Activated T-helper 1 cell treated with anti-CD3 and anti-CD28 coated beads, Interleukin-12 subunit alpha, Interleukin-12 subunit beta, Interleukin-2, Interleukin-4 antibody, amounts not matched to agents 30 ng/mL and 10 ng/mL and 1 ng/mL, durations not matched to agents 14 hours and 24 hours and 36 hours (primary cell): ENCODE measurements at regions of chr10 and their contacts with region 1.

Region 1: DNA sequence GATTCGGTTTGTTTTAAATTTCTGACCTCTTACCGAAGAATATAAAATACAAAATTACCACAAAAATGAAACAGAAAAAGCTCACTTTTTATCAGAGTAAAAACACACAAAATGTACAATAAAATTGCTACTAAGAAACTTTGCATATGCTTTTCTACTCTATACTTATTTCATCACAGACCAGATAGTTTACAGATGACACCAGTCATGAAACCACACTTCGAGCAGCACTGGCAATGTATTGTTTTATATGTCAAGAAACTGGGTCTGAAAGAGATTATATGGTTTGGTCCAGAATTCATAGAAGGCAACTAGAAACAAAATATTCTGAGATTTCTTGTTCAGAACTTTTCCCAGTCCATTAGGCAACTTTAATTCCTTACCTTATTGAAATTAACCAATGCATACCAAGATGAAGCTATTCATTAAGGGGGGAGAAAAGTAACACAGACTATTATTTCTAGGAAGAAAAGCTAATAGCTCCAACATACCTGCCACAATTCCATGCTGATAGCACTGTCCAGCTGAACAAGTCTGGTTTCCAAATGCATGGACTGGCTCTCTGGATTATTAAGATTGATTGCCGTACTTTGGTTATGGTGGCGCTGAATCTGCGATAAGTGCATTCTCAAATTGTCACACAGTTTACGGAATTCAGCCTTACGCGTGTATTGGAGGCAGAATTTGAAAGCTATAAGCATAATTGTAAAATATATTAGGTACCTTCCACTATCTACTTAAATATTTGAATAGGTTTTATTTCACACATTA is 10.0 kb downstream of the EIF3A start:
- DNase-seq: no peak
- H3K4me3 Mint-ChIP-seq: no peak overlapping the region
- H3K27ac Mint-ChIP-seq: no peak overlapping the region
- H3K4me1 Mint-ChIP-seq: peaks cover 40% of the 10 kb centered on the region
- H3K27me3 Mint-ChIP-seq: no peaks in the 10 kb centered on the region

Region 2: DNA sequence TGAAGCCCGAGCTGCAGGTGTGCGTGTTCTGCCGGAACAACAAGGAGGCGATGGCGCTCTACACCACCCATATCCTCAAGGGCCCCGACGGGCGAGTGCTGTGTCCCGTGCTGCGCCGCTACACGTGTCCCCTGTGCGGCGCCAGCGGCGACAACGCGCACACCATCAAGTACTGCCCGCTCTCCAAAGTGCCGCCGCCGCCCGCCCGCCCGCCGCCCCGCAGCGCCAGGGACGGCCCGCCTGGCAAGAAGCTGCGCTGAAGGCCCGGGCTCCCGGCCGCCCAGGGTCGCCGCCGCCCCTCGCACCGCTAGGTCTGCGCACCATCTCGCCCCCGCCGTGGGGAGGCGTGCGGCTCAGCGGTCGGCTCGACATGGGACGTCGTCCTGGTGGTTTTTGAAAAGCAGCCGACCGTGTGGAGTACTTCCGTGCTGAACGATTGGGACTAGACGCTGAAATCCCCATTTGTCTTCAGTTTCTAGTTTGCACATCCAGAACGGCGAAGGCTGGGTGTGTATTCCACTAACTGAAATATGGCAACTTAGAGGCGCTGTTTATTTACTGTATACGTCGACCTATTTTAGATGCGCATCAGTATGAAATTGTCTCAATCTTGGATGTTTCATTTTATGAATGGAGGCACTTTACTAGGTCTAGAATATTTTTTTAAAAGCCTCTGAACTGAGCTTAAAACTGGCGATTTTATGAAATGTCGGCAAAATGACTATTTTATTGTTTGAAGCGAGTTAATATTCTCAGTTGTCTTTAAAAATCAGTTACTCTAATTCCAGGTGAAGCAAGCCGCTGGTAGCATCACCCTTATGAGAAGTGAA is 39.9 kb before region 1 on chr10:
- intact Hi-C with region 1: loop called (anchors 2 kb)
- DNase-seq: peak; percentile 39
- H3K4me3 Mint-ChIP-seq: peak overlapping the region; percentile 73
- H3K27ac Mint-ChIP-seq: peak overlapping the region; percentile 40
- H3K4me1 Mint-ChIP-seq: peaks cover 25% of the 10 kb centered on the region
- H3K27me3 Mint-ChIP-seq: peaks cover 7% of the 10 kb centered on the region

Region 3: DNA sequence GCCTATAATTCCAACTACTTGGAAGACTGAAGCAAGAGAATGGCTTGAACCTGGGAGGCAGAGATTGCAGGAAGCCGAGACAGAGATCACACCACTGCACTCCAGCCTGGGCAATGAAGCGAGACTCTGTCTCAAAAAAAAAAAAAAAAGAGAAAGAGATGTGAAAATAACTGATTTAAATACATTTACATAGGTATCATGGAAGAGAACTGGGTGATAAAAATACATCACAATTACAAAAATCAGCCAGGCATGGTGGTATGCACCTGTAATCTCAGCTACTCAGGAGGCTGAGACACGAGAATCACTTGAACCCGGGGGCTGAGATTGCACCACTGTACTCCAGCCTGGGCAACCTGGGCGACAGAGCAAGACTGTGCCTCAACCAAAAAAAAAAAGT is 21.2 kb before region 1 on chr10:
- intact Hi-C with region 1: no loop called
- DNase-seq: no peak
- H3K4me3 Mint-ChIP-seq: no peak overlapping the region
- H3K27ac Mint-ChIP-seq: no peak overlapping the region
- H3K4me1 Mint-ChIP-seq: peaks cover 42% of the 10 kb centered on the region
- H3K27me3 Mint-ChIP-seq: no peaks in the 10 kb centered on the region

Region 4: DNA sequence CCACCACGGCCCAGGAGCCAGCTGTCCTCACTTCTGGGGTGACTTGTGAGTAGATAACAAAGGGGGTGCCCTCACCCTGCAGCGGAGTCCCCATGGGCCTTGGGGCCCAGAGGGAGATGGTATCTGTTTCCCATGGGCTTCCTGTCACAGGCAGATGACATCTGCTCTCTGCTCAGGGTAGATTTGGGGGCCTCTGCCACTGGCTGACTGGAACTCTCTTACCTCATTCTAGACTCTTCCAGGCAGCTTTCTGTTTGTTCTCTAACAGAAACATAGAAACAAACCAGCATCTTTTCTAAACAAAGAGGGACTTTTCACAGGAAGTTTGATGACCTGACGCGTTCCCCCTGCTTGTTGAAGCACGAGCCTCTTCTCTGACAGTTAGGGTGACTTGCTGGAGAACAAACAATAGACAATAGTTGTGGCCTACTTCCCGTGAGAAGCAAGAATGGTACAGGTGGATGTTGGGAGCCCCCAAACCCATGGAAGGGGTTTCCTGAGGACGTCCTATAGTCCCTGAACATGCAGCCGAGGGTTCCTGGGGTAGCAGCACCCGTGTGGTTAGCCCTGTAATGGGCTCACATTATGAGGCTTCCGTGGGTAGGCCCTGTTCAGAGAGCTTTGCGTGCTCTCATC is 198.4 kb after region 1 on chr10:
- intact Hi-C with region 1: no loop called
- DNase-seq: peak; percentile 85
- H3K4me3 Mint-ChIP-seq: peak overlapping the region; percentile 43
- H3K27ac Mint-ChIP-seq: peak overlapping the region; percentile 98
- H3K4me1 Mint-ChIP-seq: peaks cover 76% of the 10 kb centered on the region
- H3K27me3 Mint-ChIP-seq: no peaks in the 10 kb centered on the region